ENCODE measurements at regions of chr17 and their contacts with region 1.

Region 1: DNA sequence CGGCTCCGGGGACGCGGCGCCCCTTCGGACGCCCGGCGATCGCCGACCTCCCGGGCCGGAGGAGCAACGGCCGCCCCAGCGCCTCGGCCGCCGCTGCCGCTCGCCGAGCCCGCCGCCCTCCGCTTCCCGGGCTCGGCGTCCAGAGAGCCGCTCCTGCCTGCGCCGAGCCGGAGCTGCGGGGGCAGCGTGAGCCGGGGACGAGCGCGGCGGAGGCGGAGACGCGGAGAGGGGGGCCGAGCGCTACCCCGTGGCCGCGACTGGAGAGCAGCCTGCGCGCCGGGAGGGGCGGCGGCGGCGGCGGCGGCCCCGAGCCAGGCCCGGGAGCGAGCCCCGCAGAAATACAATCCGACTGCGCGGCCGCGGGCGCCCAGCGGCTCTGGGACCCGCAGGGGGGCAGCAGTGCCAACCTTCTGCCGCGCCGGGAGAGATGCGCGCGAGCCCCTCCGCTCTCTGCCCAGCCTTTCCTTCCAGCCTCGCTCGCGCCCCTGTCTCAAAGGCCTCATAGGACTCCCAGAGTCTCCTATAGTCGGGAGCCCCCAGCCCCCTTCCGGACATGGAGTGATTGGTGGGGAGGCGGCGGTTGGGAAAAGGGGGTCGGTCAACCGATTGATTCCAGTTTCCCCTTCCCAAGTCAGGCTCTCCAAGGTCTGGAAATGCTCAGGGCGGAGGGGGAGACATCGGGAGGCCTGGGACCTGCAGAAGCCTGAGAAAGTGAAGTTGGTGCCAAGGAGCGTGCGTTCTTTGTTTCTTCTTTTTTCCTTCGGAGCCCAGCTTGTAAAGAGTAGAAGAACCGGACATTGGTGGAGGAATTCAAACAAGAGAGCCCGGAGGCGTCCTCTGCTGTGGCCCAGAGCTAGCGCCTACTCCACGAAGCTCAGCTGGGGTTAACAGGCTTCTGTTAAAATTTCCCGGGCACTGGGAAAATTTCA is 1.1 kb upstream of the SDK2 start:
- DNase-seq: peak; percentile 61 to 72 (median 65)
- ATAC-seq: peak; percentile 41 to 87 (median 77)
- H3K4me3 ChIP-seq: peak overlapping the region in 11 of 12 donors; percentile 20 to 68 (median 57)
- H3K27ac ChIP-seq: peak overlapping the region in 4 of 12 donors; percentile 20 to 50 (median 47)
- H3K4me1 ChIP-seq: peaks cover 0 to 30% (median 15%) of the 10 kb centered on the region in 12 donors
- H3K27me3 ChIP-seq: peaks cover 0 to 68% (median 13%) of the 10 kb centered on the region in 9 donors
- CTCF ChIP-seq: peak in 4 of 12 donors; percentile 7 to 35 (median 18)
- POLR2A ChIP-seq: no peak

Region 2: DNA sequence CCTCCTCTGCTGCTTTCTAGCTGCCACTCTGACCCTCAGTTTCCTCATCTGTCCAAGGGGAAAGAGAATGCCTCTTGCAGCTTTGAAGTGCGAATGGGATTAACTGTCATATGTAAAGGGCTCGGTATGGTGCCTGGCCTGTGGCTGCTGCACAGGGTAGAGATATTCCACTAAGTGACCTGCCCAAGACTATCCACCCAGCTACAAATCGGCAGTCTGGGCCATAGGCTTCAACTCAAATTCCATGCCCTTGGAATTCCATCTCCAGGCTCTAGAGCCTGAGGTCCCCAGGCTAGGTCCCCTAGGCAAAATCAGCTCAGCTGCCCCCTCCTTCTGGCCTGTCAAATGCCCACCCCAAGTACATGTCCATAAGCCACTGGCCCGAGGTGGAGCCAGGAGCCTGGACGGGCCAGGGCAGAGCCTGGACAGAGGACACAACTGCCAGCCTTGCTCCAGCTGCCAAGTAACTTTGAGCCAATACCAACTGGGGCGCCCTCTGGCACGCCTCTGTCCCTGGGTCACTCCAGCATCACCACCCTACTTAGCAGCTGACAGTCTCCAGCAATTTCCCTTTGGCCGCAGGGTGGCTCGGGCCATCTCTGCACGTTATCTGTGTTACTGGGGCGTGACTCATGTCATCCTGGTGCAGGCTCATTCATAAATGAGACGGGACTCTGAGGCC is 58.3 kb before region 1 on chr17:
- intact Hi-C with region 1: loop called in 1 of 10 experiments (anchors 5 kb)
- DNase-seq: peak; percentile 43 to 78 (median 66)
- ATAC-seq: peak; percentile 80 to 96 (median 91)
- H3K4me3 ChIP-seq: no peak overlapping the region
- H3K27ac ChIP-seq: no peak overlapping the region
- H3K4me1 ChIP-seq: peaks cover 0 to 12% (median 1%) of the 10 kb centered on the region in 12 donors
- H3K27me3 ChIP-seq: no peaks in the 10 kb centered on the region
- CTCF ChIP-seq: peak in 2 of 12 donors; percentile 18 to 20
- POLR2A ChIP-seq: no peak

Region 3: DNA sequence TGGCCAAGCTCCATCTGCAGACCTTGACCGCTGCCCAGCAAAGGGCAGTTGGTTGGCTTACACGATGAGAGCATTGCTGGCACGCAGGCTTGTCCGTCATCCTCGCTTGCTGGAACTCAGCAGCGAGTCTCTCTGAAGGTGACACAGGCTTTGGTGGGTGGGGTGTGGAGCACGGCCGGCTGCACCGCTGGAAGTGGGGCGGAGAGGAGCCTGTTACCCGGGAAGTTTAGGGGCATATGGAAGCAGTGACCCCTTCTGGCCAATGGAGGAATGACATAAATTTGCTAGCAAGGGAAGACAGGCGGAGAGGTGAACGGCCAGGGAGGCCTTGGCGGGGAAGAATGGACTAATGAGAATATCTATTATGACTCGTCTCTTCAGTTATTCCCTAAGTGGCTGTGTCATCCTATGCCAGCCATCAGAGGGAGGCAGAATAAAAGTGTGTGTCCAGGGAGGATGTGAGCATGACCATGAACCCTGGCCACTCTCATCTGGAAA is 64.8 kb after region 1 on chr17:
- intact Hi-C with region 1: loop called in 3 of 10 experiments (anchors 2 to 10 kb)
- DNase-seq: peak; percentile 63 to 80 (median 77)
- ATAC-seq: peak; percentile 87 to 97 (median 96)
- H3K4me3 ChIP-seq: no peak overlapping the region
- H3K27ac ChIP-seq: no peak overlapping the region
- H3K4me1 ChIP-seq: peaks cover 0 to 11% (median 3%) of the 10 kb centered on the region in 12 donors
- H3K27me3 ChIP-seq: peaks cover 0 to 23% (median 3%) of the 10 kb centered on the region in 9 donors
- CTCF ChIP-seq: peak; percentile 65 to 87 (median 78)
- POLR2A ChIP-seq: no peak

Region 4: DNA sequence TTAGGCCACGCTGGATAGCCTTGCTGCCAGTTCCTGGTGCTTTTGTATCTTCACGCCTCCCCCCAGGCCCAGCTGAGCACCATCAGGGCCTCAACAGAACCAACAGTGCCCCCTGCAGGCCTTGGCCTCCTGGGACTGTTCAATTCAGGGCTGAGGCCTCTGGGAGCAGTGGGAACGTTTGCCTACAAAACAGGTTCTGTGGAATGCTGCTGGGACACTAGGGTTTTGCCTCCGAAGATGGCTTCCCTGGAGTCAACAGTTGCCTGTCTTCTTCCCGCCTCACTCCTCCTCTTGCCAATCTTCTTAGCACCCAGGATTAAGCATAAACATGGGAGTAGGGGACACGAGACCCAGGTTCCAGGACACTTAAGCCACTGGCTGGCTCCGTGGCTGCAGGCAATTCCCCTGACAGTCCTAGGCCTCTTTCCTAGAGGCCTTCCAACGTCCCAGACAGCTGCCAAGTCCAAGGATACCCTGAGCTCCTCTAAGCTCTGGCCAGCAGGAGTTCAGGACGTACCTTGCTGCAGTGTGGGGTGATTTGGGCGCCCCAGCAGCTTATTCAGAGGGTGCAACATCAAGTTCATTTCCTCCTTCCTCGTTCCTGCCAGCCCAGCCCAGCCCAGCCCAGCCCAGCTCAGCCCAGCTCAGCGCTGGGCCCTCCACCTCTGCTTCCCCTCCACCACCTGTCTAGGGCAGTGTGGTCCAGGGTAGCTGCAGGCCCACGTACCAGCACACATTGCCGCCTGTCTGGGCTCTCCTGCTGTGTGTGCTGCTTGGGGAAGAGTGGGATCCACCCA is 311.6 kb after region 1 on chr17:
- intact Hi-C with region 1: loop called in 5 of 10 experiments (anchors 10 kb)
- DNase-seq: peak in 2 of 5 donors; percentile 20 to 37
- ATAC-seq: peak in 3 of 4 donors; percentile 37 to 57 (median 42)
- H3K4me3 ChIP-seq: no peak overlapping the region
- H3K27ac ChIP-seq: no peak overlapping the region
- H3K4me1 ChIP-seq: peaks cover 0 to 12% (median 9%) of the 10 kb centered on the region in 12 donors
- H3K27me3 ChIP-seq: peaks cover 0 to 21% (median 12%) of the 10 kb centered on the region in 9 donors
- CTCF ChIP-seq: peak; percentile 13 to 54 (median 44)
- POLR2A ChIP-seq: no peak